H1 (cell line): ENCODE measurements at regions of chr5 and their contacts with region 1.

Region 1: GRCh38 chr5:53335115-53335514 is 145.3 kb upstream of the FST start:
- DNase-seq: no peak
- H3K4me3 ChIP-seq: no peak overlapping the region
- H3K27ac ChIP-seq: no peak overlapping the region
- H3K4me1 ChIP-seq: no peaks in the 10 kb centered on the region
- H3K27me3 ChIP-seq: no peaks in the 10 kb centered on the region
- CTCF ChIP-seq: peak; percentile 52 to 70 (median 54); a peak in 3 of 4 replicates
- EP300 ChIP-seq: no peak
- POLR2A ChIP-seq: no peak
- RAD21 ChIP-seq: peak; percentile 61 to 69

Region 2: DNA sequence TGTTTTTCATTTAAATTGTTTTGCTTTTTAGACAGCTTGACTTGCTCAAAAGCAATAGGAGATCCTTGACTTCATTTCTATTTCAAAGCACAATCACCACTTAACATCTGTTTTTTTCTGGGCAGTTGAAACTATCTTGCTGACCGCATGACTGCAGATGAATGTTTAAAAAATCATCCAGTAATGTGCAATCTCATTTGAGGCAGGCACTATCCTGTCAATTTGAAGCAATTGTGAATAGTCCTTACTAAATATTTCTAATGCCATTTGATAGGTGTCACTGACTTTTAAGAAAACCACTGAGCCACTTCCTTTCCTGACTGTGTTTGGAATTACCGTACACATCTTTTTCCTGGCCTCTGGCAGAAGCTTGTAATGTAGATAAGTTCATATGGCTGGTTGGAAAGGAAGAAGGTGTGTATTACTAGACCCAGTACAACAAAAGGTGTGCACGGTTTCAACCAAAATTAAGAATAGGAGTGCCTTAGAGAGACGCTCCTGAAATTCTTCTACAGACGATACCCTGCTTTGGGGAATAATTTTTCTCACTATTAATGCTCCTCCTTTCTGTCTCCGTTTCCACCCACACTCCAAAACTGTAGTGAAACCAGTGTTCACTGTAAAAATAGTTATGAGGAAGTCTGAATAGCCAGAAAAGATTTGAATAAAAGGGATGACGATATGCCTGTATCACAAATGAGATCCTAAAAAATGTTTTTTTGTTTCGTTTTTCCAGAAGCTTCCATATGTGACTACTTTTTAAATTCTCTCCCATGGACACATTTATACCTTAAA is 88.9 kb before region 1 on chr5:
- CTCF ChIA-PET with region 1: no interaction called
- POLR2A ChIA-PET with region 1: no interaction called
- DNase-seq: no peak
- H3K4me3 ChIP-seq: no peak overlapping the region
- H3K27ac ChIP-seq: no peak overlapping the region
- H3K4me1 ChIP-seq: no peaks in the 10 kb centered on the region
- H3K27me3 ChIP-seq: no peaks in the 10 kb centered on the region
- CTCF ChIP-seq: no peak
- EP300 ChIP-seq: no peak
- POLR2A ChIP-seq: no peak
- RAD21 ChIP-seq: no peak

Region 3: GRCh38 chr5:53318303-53318702 is 16.8 kb before region 1 on chr5:
- CTCF ChIA-PET with region 1: interaction called, 18 read pairs
- POLR2A ChIA-PET with region 1: no interaction called
- DNase-seq: no peak
- H3K4me3 ChIP-seq: no peak overlapping the region
- H3K27ac ChIP-seq: no peak overlapping the region
- H3K4me1 ChIP-seq: no peaks in the 10 kb centered on the region
- H3K27me3 ChIP-seq: no peaks in the 10 kb centered on the region
- CTCF ChIP-seq: peak in 2 of 3 experiments; percentile 28 to 65; a peak in 2 of 4 replicates
- EP300 ChIP-seq: no peak
- POLR2A ChIP-seq: no peak
- RAD21 ChIP-seq: peak; percentile 25 to 39; a peak in 3 of 4 replicates